HEK293 (cell line): ENCODE measurements at regions of chr19 and their contacts with region 1.

Region 1: GRCh38 chr19:58451358-58452101 is at the start of gene ZNF324B:
- H3K4me3 ChIP-seq: peak within 1 kb of the TSS; percentile 93
- H3K27ac ChIP-seq: peak within 1 kb of the TSS; percentile 38; the same call in 1 of the 2 replicates
- H3K4me1 ChIP-seq: peaks cover 7% of the 10 kb centered on the region; the same call in 1 of the 2 replicates
- CTCF ChIP-seq: peak; percentile 67

Region 2: DNA sequence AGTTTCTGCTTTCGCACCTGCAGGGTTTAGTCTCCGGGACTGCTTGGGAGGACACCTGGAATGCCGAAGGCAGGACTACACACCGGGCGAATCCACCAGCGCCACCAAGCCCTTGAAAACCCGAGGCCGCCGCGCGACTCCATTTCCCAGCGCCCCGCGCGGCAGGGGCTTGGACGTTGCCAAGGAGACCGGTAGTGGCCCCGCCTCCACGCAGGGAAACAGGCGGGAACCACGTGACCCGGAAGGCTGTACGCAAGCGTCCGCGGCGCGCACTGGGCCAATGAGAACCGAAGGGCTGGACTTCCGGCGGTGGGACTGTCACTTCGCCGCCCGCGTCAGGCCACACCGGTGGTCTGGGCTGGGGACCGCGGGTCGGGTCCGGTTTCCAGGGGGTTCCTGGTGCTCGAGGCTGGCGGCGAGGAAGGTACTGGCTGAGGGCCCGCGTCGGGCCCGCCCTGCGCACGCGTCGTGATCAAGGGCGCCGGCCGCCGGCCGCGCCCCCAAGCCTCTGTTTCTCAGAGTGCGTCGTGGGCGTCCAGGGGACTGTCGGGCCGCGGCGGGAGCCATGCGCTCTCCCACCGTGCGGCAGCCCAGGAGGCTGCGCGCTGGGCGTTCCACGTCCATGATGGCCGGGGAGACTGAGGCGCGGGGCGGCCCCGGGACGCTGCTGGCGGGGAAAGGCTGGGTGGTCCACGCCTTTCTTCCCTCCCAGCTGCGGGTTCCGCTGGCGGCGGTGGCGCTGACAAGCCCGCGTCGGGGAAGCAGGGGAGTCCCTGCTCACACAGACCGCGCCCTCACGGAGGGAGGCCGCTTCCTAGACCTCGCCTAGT is 15.4 kb after region 1 on chr19 and contains the start of gene ZNF324:
- CTCF ChIA-PET with region 1: interaction called, 3 read pairs
- POLR2A ChIA-PET with region 1: interaction called, 17 read pairs
- H3K4me3 ChIP-seq: peak within 1 kb of the TSS; percentile 97
- H3K27ac ChIP-seq: peak within 1 kb of the TSS; percentile 74; the same call in 1 of the 2 replicates
- H3K4me1 ChIP-seq: no peaks in the 10 kb centered on the region; the same call in 1 of the 2 replicates
- CTCF ChIP-seq: peak; percentile 49; the same call in 1 of the 2 replicates

Region 3: GRCh38 chr19:58569661-58570285 is 118.2 kb after region 1 on chr19:
- CTCF ChIA-PET with region 1: no interaction called
- POLR2A ChIA-PET with region 1: no interaction called
- H3K4me3 ChIP-seq: no peak overlapping the region
- H3K27ac ChIP-seq: no peak overlapping the region; the same call in 1 of the 2 replicates
- H3K4me1 ChIP-seq: peaks cover 8% of the 10 kb centered on the region
- CTCF ChIP-seq: no peak